ENCODE measurements at regions of chr17 and their contacts with region 1.

Region 1: DNA sequence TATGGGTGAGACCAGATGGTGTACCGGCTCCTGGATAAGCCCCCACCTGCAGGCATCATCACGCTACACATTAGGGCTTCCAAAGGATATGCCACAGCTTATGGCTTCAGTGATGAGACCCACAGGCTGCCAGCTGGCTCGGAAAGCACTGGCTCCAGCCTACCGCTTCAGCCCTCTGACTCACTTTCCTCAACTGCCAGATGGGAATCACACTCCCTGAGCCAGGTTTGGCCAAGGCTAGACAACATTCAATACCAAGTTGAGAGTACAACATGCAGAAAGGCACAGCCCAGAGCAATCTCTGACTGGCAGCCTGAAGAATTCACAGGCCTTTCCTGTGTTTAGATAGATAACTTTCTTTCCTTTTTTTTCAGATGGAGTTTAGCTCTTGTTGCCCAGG is 10.3 kb downstream of the CENPV start:
- DNase-seq: no peak
- ATAC-seq: no peak
- H3K4me3 ChIP-seq: no peak overlapping the region
- H3K4me3 Mint-ChIP-seq: no peak overlapping the region
- H3K27ac ChIP-seq: no peak overlapping the region
- H3K27ac Mint-ChIP-seq: no peak overlapping the region
- H3K4me1 ChIP-seq: no peaks in the 10 kb centered on the region
- H3K4me1 Mint-ChIP-seq: no peaks in the 10 kb centered on the region
- H3K27me3 ChIP-seq: no peaks in the 10 kb centered on the region
- H3K27me3 Mint-ChIP-seq: no peaks in the 10 kb centered on the region
- CTCF ChIP-seq: no peak

Region 2: GRCh38 chr17:16081507-16082087 is 261.4 kb before region 1 on chr17:
- CTCF ChIA-PET with region 1: no interaction called
- POLR2A ChIA-PET with region 1: interaction called, 11 read pairs
- intact Hi-C with region 1: no loop called
- DNase-seq: no peak
- ATAC-seq: no peak
- H3K4me3 ChIP-seq: no peak overlapping the region
- H3K4me3 Mint-ChIP-seq: no peak overlapping the region
- H3K27ac ChIP-seq: no peak overlapping the region
- H3K27ac Mint-ChIP-seq: no peak overlapping the region
- H3K4me1 ChIP-seq: no peaks in the 10 kb centered on the region
- H3K4me1 Mint-ChIP-seq: no peaks in the 10 kb centered on the region
- H3K27me3 ChIP-seq: no peaks in the 10 kb centered on the region
- H3K27me3 Mint-ChIP-seq: no peaks in the 10 kb centered on the region
- CTCF ChIP-seq: no peak

Region 3: DNA sequence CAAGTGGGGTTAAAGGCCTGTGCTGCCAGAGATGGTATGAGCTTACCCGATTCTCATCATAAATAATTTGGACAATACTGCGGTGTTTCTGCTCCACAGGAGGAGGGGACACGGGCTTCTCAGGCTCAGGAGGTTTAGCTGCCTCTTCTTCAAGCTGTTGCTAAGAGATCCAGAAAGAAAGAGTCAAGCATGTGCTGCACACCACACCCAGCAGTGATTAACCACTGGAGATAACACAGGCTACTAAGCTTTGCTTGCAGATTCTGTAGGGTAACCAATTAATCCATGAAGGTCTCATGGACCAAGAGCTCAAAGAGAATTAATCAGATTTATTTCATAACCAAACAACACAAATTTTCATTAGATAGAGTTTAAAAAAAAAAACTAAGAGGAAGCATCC is 184.3 kb before region 1 on chr17:
- CTCF ChIA-PET with region 1: no interaction called
- POLR2A ChIA-PET with region 1: no interaction called
- intact Hi-C with region 1: no loop called
- DNase-seq: no peak
- ATAC-seq: no peak
- H3K4me3 ChIP-seq: no peak overlapping the region
- H3K4me3 Mint-ChIP-seq: no peak overlapping the region
- H3K27ac ChIP-seq: no peak overlapping the region
- H3K27ac Mint-ChIP-seq: no peak overlapping the region
- H3K4me1 ChIP-seq: no peaks in the 10 kb centered on the region
- H3K4me1 Mint-ChIP-seq: no peaks in the 10 kb centered on the region
- H3K27me3 ChIP-seq: no peaks in the 10 kb centered on the region
- H3K27me3 Mint-ChIP-seq: no peaks in the 10 kb centered on the region
- CTCF ChIP-seq: no peak